ENCODE measurements at regions of chr1 and their contacts with region 1.

Region 1: GRCh38 chr1:190049314-190049713 is 428.4 kb downstream of the BRINP3 start:
- DNase-seq: no peak
- H3K4me3 ChIP-seq: no peak overlapping the region
- H3K27ac ChIP-seq: no peak overlapping the region
- H3K4me1 ChIP-seq: no peaks in the 10 kb centered on the region
- H3K27me3 ChIP-seq: no peaks in the 10 kb centered on the region
- CTCF ChIP-seq: no peak
- POLR2A ChIP-seq: no peak

Region 2: GRCh38 chr1:189787207-189787606 is 262.1 kb before region 1 on chr1:
- intact Hi-C with region 1: no loop called
- DNase-seq: no peak
- H3K4me3 ChIP-seq: no peak overlapping the region
- H3K27ac ChIP-seq: no peak overlapping the region
- H3K4me1 ChIP-seq: no peaks in the 10 kb centered on the region
- H3K27me3 ChIP-seq: no peaks in the 10 kb centered on the region
- CTCF ChIP-seq: no peak
- POLR2A ChIP-seq: no peak

Region 3: DNA sequence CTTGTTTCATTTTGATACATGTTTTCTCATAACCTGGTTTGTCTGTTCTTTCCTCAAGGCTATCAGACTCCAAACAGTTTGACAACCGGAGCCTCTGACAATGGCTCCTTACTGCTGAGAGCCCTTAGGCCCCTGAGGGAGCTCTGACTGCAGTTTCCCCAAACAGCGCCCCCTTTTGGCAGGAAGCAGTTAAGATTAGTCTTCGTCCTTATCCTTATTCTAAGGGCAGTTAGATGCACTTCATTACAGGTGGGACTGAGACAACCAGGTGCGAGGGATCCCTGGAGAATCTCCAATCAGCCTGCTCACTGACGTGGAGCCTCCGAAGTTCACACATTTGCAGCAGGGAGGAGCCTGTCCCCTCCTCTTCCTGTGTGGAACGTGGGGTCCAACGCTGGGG is 35.2 kb after region 1 on chr1:
- intact Hi-C with region 1: no loop called
- DNase-seq: no peak
- H3K4me3 ChIP-seq: no peak overlapping the region
- H3K27ac ChIP-seq: no peak overlapping the region
- H3K4me1 ChIP-seq: no peaks in the 10 kb centered on the region
- H3K27me3 ChIP-seq: no peaks in the 10 kb centered on the region
- CTCF ChIP-seq: no peak
- POLR2A ChIP-seq: no peak

Region 4: GRCh38 chr1:190832511-190832910 is 783.2 kb after region 1 on chr1:
- intact Hi-C with region 1: loop called (anchors 5 kb)
- DNase-seq: no peak
- H3K4me3 ChIP-seq: no peak overlapping the region
- H3K27ac ChIP-seq: no peak overlapping the region
- H3K4me1 ChIP-seq: no peaks in the 10 kb centered on the region
- H3K27me3 ChIP-seq: no peaks in the 10 kb centered on the region
- CTCF ChIP-seq: no peak
- POLR2A ChIP-seq: no peak

Measured in breast epithelium (tissue), 4 donors.